Activated CD4-positive, alpha-beta memory T cell treated with anti-CD3 and anti-CD28 coated beads for 36 hours (primary cell): ENCODE measurements at regions of chr1 and their contacts with region 1.

Region 1: DNA sequence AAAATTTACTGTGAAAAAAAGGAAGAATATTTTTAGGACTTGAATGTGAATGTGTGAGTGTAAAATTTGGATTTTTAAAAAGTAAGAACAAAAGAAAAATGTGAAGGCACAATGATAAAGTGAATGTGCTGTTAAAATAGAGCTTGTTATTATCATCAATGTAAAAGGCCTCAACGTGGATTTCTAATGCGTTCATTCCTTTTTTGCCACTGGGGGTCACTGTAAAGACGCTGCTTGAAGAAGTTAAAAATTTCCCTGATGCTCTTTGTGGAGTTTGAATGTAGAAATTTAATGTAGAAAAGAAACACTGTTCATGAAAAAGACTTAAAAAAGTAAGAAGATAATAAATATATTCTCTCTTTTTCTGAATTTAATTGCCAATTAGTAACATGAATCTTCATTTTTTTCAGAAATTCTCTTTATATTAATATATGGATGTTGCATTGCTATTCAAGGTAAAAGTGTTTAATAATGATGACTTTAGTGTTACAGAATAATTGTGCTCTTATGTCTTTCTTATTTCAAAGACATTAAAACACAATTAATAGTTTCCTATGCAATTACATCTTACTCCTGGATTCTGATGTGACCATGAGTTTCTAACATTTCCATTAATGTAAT is 161.5 kb downstream of the DNM3 start:
- DNase-seq: peak; percentile 25
- H3K4me3 Mint-ChIP-seq: no peak overlapping the region
- H3K27ac Mint-ChIP-seq: no peak overlapping the region
- H3K4me1 Mint-ChIP-seq: no peaks in the 10 kb centered on the region
- H3K27me3 Mint-ChIP-seq: no peaks in the 10 kb centered on the region

Region 2: GRCh38 chr1:171717062-171717718 is 285.6 kb before region 1 on chr1:
- CTCF ChIA-PET with region 1: no interaction called
- POLR2A ChIA-PET with region 1: no interaction called
- intact Hi-C with region 1: no loop called
- DNase-seq: no peak
- H3K4me3 Mint-ChIP-seq: no peak overlapping the region
- H3K27ac Mint-ChIP-seq: no peak overlapping the region
- H3K4me1 Mint-ChIP-seq: peaks cover 6% of the 10 kb centered on the region
- H3K27me3 Mint-ChIP-seq: no peaks in the 10 kb centered on the region

Region 3: DNA sequence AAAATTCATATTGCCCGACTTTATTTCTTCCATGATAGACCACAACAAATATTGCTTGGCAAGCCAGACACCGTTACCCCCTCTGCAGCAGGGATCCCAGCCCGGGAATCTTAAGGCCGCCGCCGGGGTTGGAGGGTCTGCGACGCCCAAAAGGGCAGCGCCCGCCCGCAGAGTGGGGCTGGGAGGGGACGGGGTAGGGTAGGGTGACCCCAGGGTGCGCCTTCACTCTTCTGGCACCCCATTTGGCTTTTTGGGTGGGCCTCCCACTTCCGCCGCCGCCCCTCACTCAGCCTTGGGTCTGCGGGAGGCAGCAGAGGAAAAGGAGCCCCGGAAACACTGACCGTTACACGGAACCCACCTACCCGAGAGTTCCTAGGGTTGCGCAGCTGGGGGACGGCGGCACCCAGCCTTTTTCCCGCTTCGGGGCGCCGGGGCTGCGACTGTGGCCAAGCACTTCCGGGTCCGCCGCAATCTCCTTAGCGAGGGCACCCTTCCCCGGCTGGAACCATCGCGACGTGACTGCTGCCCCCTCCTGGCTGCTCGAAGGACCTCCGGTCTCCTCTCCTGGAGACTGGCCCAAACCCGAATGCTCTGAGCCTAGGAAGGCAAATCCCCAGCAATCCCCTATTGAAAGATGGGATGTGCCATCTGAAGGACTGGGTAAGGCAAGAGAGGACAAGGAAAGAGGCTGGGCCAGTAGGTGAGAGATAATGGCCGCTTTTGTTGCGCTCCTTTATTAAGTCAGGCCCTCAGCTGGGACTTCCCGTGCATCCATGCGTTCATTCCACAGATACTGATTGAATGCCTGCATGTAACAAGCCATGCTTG is 441.0 kb after region 1 on chr1 and contains the start of gene PIGC:
- CTCF ChIA-PET with region 1: interaction called, 16 read pairs
- POLR2A ChIA-PET with region 1: no interaction called
- intact Hi-C with region 1: loop called (anchors 2 kb)
- DNase-seq: peak; percentile 95
- H3K4me3 Mint-ChIP-seq: peak within 1 kb of the TSS; percentile 87
- H3K27ac Mint-ChIP-seq: peak within 1 kb of the TSS; percentile 83
- H3K4me1 Mint-ChIP-seq: peaks cover 38% of the 10 kb centered on the region
- H3K27me3 Mint-ChIP-seq: no peaks in the 10 kb centered on the region
- total RNA-seq, gene PIGC: 16.6 to 17.4 TPM

Region 4: DNA sequence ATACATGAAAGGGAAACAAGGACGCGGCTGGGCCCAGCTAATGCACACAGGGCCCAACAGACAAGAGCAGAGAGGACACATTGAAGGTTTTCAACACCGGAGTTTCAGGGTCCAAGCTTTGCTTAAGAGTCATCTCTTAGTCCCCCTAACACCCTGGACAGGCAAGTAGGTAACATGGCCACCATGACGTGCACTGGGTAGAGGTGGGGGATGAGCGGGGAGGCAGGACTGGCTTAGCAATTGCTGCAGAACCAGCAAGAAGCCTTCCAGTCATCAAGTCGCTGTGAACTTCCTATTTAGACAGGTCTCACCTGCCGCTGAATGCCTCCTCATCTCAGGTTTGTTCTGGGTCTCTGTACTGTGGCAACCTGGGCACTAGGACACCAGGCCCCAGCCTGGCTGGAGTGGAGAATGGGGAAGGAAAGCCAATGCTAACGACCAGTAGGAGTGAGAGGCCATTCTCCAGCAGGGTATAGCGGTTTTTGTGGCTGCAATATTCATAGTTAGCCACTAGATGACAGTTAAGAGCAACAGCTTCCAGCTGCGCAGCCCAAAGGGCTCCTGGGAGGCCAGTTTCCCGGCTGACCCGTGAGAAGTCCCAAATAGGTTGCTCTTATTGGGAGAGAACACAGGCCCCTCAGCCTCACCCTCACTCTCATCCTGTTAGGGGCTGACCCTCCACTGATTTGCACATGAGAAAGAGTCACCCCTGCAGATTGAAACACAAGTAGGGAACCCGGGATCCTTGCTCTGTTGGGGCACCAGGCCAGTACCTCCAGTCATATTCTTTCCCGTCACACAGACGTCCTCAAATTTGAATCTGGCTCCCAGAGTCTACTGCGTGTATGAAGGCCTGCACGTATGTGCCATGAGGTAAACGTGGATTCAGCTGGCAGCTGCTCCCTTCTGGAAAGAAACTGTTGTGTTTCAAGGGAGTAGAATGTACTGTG is 447.0 kb after region 1 on chr1:
- CTCF ChIA-PET with region 1: interaction called, 17 read pairs
- POLR2A ChIA-PET with region 1: no interaction called
- intact Hi-C with region 1: loop called (anchors 2 kb)
- DNase-seq: peak; percentile 47
- H3K4me3 Mint-ChIP-seq: peak overlapping the region; percentile 36
- H3K27ac Mint-ChIP-seq: no peak overlapping the region
- H3K4me1 Mint-ChIP-seq: peaks cover 31% of the 10 kb centered on the region
- H3K27me3 Mint-ChIP-seq: no peaks in the 10 kb centered on the region